Panc1 (cell line): ENCODE measurements at regions of chr3 and their contacts with region 1.

Region 1: GRCh38 chr3:172104471-172105072 is 65.2 kb downstream of the FNDC3B start:
- DNase-seq: no peak
- ATAC-seq: no peak
- H3K4me3 ChIP-seq: no peak overlapping the region
- H3K27ac ChIP-seq: peak overlapping the region; percentile 70
- H3K4me1 ChIP-seq: peaks cover 77% of the 10 kb centered on the region
- H3K27me3 ChIP-seq: no peaks in the 10 kb centered on the region
- CTCF ChIP-seq: no peak

Region 2: DNA sequence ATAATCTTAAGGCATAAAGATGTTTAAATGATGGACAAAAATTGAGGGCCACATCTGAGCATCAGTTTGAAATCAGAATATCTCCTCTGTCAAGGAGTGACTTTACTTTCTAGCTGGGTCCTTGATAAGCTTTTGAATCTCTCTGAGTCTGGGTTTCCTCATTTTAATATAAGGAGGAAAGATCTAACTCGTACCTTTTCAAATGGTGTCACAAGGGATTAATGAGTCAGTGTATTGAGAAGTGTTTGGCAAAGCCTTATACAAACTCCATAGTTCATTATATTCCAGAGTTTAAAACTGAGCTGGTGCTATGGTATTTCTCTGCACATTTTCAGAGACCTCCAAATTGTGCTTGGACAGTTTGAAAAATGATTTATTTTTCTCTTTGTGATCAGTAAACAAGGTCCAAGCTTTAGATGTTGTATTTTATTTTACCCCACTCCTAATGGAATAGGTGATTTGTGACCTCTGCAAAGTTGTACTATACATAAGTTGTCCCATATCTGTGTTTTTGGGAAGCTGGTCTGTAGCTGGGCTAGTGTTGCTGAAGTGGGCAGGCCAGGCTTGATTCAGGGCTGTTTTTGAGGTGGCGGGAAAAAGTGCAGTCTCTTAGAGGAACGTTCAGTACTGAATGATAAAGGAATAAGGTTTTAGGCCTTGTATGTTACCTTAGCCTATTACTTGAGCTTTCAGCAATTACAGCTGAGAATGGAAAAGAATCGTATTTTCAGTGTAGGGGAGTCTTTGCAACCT is 59.6 kb before region 1 on chr3:
- CTCF ChIA-PET with region 1: no interaction called
- POLR2A ChIA-PET with region 1: interaction called, 11 read pairs
- in situ Hi-C with region 1: no loop called
- intact Hi-C with region 1: no loop called
- DNase-seq: no peak
- ATAC-seq: no peak
- H3K4me3 ChIP-seq: no peak overlapping the region; a peak in 2 of 4 replicates
- H3K27ac ChIP-seq: peak overlapping the region; percentile 97
- H3K4me1 ChIP-seq: peaks cover 50% of the 10 kb centered on the region
- H3K27me3 ChIP-seq: no peaks in the 10 kb centered on the region
- CTCF ChIP-seq: no peak

Region 3: GRCh38 chr3:172177803-172178316 is 73.3 kb after region 1 on chr3:
- CTCF ChIA-PET with region 1: interaction called, 10 read pairs
- POLR2A ChIA-PET with region 1: no interaction called
- in situ Hi-C with region 1: no loop called
- intact Hi-C with region 1: no loop called
- DNase-seq: no peak
- ATAC-seq: no peak
- H3K4me3 ChIP-seq: no peak overlapping the region
- H3K27ac ChIP-seq: no peak overlapping the region
- H3K4me1 ChIP-seq: peaks cover 68% of the 10 kb centered on the region
- H3K27me3 ChIP-seq: no peaks in the 10 kb centered on the region
- CTCF ChIP-seq: no peak

Region 4: DNA sequence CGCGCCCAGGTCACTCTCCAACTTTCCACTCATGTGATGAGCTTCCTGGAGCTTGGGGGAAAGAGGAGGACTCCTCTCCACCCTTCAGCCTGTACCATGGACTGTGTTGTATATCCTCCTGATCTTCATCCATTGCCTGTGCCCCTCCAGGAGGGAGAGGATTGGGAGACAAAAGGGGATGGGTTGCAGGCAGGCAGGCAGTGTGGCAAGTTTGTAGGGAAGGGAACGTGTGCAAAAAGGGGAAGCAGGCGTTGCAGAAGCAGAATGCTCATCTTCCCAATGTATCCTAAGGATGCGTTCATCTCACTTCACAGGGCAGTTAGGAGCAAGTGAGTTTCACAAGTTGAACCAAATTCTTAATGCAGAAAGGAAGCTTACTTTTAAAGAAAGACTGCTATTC is 371.8 kb after region 1 on chr3:
- CTCF ChIA-PET with region 1: no interaction called
- POLR2A ChIA-PET with region 1: no interaction called
- in situ Hi-C with region 1: no loop called
- intact Hi-C with region 1: no loop called
- DNase-seq: no peak
- ATAC-seq: no peak
- H3K4me3 ChIP-seq: no peak overlapping the region; a peak in 1 of 4 replicates
- H3K27ac ChIP-seq: no peak overlapping the region
- H3K4me1 ChIP-seq: no peaks in the 10 kb centered on the region
- H3K27me3 ChIP-seq: no peaks in the 10 kb centered on the region
- CTCF ChIP-seq: no peak